Sciatic nerve (tissue), 2 donors: ENCODE measurements at regions of chr12 and their contacts with region 1.

Region 1: DNA sequence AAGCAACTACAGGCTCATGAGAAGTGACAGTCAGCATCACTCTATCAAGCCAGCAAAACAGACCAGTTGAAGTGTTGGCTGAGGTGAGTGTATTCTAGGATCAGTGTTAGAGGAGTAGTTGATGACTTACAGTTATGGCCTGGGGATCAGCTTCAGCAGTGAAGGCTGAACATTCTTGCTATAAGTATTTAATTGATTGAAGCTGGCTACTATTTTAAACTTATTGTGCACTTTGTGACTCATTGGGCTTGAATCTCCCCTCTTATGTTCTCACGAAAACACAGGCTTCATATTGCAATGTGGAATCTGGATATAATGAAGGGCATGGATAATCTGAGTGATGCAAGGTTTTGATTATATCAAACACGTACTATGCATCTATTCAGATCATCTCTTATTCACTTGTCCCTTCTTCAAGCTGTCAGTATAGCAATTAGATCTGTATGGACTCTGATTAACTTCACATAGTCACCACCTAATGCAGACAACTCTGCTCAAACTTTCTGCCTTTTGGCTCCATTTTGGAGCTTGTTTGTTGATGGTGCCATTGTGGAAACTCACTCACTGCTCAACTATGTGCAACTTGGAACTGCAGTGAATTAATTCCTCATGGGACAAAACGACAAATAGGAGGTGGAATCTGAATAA is 309.2 kb downstream of the SLC16A7 start:
- DNase-seq: no peak
- ATAC-seq: no peak

Region 2: DNA sequence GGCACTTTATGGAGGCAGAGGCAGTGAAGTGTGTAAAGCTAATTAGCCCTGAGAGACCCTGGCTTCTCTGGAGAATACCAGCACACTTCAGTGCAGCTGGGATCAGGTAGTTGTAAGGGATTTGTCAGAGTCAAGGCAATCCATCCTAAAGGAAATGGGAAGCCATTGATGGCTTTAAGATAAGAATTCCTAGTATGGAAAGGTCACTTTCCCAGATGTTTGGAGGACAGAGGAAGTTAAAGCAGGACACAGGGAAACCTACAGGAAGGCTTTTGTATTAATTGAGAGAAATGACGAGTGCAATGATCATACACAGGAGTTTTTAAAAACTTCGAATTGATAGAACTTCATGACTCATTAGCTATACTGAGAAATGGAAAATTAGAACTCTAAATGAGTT is 54.7 kb before region 1 on chr12:
- intact Hi-C with region 1: no loop called
- DNase-seq: no peak
- ATAC-seq: no peak

Region 3: DNA sequence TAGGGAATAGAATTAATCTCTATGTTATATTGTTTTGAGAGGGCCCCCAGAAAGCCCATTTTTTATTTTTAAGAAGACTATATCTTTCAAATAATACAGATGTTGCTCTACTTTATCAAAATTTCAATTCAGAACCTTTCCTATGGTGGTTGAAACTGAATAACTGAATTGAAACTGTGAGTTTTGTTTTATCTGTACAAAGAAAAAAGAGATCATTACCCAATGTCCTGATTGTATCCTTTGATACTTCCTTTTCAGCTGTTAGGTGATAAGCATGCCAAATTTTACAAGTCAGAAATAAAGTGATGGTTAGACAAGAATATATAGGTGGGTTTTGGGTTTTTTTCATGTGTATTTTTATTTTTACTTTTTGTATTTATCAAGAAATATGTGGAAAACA is 1062.1 kb after region 1 on chr12:
- intact Hi-C with region 1: loop called (anchors 5 kb)
- DNase-seq: no peak
- ATAC-seq: no peak